ENCODE measurements at regions of chr12 and their contacts with region 1.

Region 1: DNA sequence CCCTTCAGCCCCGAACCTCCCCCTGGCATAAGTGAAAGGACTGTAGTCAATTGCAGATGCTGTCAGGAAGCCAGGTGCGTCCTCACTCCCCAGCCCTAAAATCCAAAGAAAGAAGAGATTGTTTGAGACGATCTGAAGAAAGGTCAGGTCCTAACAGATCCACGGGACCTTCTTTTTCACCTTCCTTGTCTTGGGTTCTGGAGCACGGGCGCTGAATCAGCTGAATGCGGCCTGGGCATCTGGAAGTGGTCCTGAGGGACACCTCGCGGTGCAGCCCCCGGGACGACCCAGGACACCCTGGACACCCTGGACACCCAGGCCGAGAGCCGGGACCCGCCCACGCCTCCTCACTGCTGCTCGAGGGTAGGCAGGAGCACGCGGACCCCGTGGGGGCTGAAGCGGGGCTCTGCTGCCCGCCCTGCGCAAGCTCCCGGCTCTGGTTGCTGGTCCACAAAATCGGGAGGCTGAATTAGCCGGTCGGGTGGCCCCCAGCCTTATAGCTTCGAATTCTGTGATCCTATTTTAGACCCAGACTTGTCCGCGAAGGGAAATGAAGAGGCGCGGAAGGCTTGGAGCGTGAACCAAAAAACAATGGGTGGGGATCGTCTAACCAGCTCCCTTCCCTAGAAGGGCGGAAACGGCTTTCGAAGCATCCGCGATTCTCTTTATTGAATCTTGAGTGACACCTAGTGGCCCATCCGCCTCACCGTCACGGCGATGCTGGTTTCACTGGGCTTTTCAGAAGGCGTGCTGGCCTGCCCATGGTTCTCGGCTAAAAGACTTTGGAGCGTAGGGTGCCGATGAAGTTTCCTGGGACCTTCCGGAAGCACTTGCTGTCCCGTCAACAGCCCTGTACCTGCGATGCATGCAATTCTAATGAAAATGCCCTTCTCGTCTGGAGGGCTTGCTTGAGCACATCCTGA is 46.4 kb upstream of the PLXNC1 start:
- DNase-seq: peak; percentile 80
- H3K4me3 ChIP-seq: peak overlapping the region; percentile 50 to 66 (median 59)
- H3K27ac ChIP-seq: no peak overlapping the region
- H3K4me1 ChIP-seq: peaks cover 28% of the 10 kb centered on the region
- H3K27me3 ChIP-seq: no peaks in the 10 kb centered on the region
- CTCF ChIP-seq: peak; percentile 77 to 83

Region 2: DNA sequence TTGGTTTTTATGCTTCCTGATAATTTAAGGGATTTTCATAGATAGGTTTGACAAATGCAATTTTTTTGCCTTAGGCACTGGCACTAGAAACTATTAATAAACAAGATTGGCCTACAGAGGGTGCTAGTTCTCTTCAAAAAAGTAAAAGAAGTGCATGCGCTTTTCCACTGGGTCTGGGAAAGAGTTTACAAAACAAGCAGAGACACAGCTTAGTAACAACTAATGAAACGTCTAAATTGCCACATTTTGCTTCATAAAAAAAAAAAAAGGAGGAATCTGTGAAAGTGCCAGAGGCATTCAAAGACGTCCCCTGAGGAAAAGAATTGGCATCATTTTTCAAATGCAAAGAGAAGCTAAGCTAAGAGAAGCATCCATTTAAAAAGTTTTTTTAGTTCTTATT is 1114.6 kb before region 1 on chr12:
- CTCF ChIA-PET with region 1: interaction called, 3 read pairs
- dilution Hi-C with region 1: no loop called
- in situ Hi-C with region 1: loop called (anchors 25 kb)
- intact Hi-C with region 1: loop called (anchors 2 kb)
- DNase-seq: peak; percentile 58
- H3K4me3 ChIP-seq: no peak overlapping the region
- H3K27ac ChIP-seq: no peak overlapping the region
- H3K4me1 ChIP-seq: peaks cover 5% of the 10 kb centered on the region
- H3K27me3 ChIP-seq: no peaks in the 10 kb centered on the region
- CTCF ChIP-seq: peak; percentile 45 to 53

Region 3: GRCh38 chr12:93441617-93442410 is 660.2 kb before region 1 on chr12 and contains the start of gene UBE2N:
- CTCF ChIA-PET with region 1: no interaction called
- dilution Hi-C with region 1: no loop called
- in situ Hi-C with region 1: no loop called
- intact Hi-C with region 1: loop called (anchors 5 kb)
- DNase-seq: peak; percentile 96
- H3K4me3 ChIP-seq: peak within 1 kb of the TSS; percentile 72 to 97 (median 93)
- H3K27ac ChIP-seq: peak within 1 kb of the TSS; percentile 95
- H3K4me1 ChIP-seq: peaks cover 32% of the 10 kb centered on the region
- H3K27me3 ChIP-seq: no peaks in the 10 kb centered on the region
- CTCF ChIP-seq: no peak
- total RNA-seq, gene UBE2N: 65.5 to 137 TPM

Region 4: GRCh38 chr12:93524414-93525146 is 577.4 kb before region 1 on chr12:
- CTCF ChIA-PET with region 1: interaction called, 7 read pairs
- dilution Hi-C with region 1: loop called (anchors 5 kb)
- in situ Hi-C with region 1: no loop called
- intact Hi-C with region 1: loop called (anchors 1 kb)
- DNase-seq: no peak
- H3K4me3 ChIP-seq: no peak overlapping the region
- H3K27ac ChIP-seq: no peak overlapping the region
- H3K4me1 ChIP-seq: peaks cover 5% of the 10 kb centered on the region
- H3K27me3 ChIP-seq: no peaks in the 10 kb centered on the region
- CTCF ChIP-seq: no peak

Region 5: DNA sequence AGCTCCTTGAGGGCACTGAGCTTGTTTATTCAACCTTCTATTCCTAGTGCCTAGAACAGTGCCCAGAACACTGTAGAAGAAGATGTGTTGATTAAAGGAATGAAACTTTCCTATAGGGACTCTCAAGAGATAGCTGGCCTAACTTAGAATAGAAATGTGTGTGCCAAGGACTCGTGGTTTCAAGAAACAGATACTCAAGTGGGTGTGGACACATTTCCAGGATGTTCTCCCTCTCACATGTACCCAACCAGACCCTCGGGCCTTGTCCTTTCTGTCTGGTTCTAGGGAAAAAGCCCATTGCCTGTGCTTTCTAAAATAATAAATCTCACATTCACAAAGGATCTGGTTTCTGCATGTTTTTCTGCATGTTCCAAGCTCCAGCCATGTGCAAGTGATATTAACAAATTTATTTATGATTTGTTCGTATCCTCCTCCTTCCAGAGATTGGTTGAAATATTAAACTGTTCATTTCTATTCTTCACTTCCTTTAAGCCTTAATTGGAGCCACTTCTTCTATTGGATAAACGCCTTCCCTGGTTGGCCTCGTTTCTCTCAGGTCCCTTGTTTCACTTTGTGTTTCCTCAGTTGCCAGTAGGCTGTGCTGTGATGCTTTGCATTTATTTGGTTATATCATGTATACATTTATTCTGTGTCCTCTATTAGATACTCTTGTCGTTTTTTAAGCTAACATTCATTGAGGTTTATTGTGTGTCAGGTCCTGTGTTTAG is 335.0 kb before region 1 on chr12:
- CTCF ChIA-PET with region 1: interaction called, 18 read pairs
- dilution Hi-C with region 1: no loop called
- in situ Hi-C with region 1: loop called (anchors 5 to 10 kb)
- intact Hi-C with region 1: loop called (anchors 1 kb)
- DNase-seq: peak; percentile 61
- H3K4me3 ChIP-seq: no peak overlapping the region
- H3K27ac ChIP-seq: no peak overlapping the region
- H3K4me1 ChIP-seq: peaks cover 6% of the 10 kb centered on the region
- H3K27me3 ChIP-seq: no peaks in the 10 kb centered on the region
- CTCF ChIP-seq: peak; percentile 63

Region 6: GRCh38 chr12:93894391-93895088 is 207.5 kb before region 1 on chr12:
- CTCF ChIA-PET with region 1: no interaction called
- dilution Hi-C with region 1: no loop called
- in situ Hi-C with region 1: no loop called
- intact Hi-C with region 1: loop called (anchors 5 kb)
- DNase-seq: no peak
- H3K4me3 ChIP-seq: no peak overlapping the region
- H3K27ac ChIP-seq: no peak overlapping the region
- H3K4me1 ChIP-seq: no peaks in the 10 kb centered on the region
- H3K27me3 ChIP-seq: no peaks in the 10 kb centered on the region
- CTCF ChIP-seq: no peak

Region 7: GRCh38 chr12:94074980-94075928 is 26.7 kb before region 1 on chr12:
- CTCF ChIA-PET with region 1: interaction called, 15 read pairs
- dilution Hi-C with region 1: no loop called
- in situ Hi-C with region 1: no loop called
- intact Hi-C with region 1: loop called (anchors 2 kb)
- DNase-seq: peak; percentile 79
- H3K4me3 ChIP-seq: no peak overlapping the region
- H3K27ac ChIP-seq: no peak overlapping the region
- H3K4me1 ChIP-seq: peaks cover 4% of the 10 kb centered on the region
- H3K27me3 ChIP-seq: peaks cover 5% of the 10 kb centered on the region
- CTCF ChIP-seq: peak; percentile 81 to 84

Region 8: GRCh38 chr12:94186278-94187241 is 84.6 kb after region 1 on chr12:
- CTCF ChIA-PET with region 1: no interaction called
- dilution Hi-C with region 1: no loop called
- in situ Hi-C with region 1: no loop called
- intact Hi-C with region 1: no loop called
- DNase-seq: no peak
- H3K4me3 ChIP-seq: peak overlapping the region in 2 of 3 experiments; percentile 5 to 28
- H3K27ac ChIP-seq: no peak overlapping the region
- H3K4me1 ChIP-seq: peaks cover 3% of the 10 kb centered on the region
- H3K27me3 ChIP-seq: peaks cover 9% of the 10 kb centered on the region
- CTCF ChIP-seq: no peak

Measured in mammary epithelial cell (primary cell).